PC-3 (cell line): ENCODE measurements at regions of chr10 and their contacts with region 1.

Region 1: DNA sequence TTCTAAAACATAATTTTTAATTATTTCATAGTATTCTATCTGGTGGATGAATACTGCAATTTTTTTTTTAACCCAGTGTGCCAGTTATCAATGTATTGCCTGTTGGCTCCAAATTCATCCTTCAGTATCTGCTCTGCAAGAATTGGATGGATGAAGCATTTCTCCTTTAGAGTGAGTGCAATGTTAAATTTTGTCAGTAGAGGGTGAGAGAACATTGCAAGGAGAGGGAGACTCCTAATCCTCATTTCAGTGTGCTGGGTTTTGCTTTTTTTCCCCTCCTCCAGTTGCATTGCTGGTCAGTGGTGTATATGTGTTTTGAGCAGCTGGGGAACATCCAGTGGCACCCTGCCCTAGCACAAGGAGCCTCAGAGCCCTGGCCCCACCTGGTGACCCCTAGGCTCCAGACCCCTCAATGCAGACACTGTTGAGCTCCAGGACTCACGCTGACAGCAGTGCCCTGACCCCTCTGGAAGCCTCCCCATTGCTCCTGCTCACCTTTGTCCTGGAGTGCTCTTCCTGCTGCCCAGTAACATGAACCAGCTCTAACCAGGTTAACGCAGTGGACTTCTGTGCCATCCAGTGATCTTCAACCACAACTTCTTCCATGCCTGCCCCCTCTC is 199.4 kb downstream of the USP6NL start:
- DNase-seq: no peak
- ATAC-seq: no peak
- H3K4me3 ChIP-seq: no peak overlapping the region
- H3K27ac ChIP-seq: no peak overlapping the region
- H3K4me1 ChIP-seq: no peaks in the 10 kb centered on the region
- H3K27me3 ChIP-seq: no peaks in the 10 kb centered on the region
- CTCF ChIP-seq: 0 out of 2 replicates have a peak, but pooled peaks have one; percentile 22

Region 2: DNA sequence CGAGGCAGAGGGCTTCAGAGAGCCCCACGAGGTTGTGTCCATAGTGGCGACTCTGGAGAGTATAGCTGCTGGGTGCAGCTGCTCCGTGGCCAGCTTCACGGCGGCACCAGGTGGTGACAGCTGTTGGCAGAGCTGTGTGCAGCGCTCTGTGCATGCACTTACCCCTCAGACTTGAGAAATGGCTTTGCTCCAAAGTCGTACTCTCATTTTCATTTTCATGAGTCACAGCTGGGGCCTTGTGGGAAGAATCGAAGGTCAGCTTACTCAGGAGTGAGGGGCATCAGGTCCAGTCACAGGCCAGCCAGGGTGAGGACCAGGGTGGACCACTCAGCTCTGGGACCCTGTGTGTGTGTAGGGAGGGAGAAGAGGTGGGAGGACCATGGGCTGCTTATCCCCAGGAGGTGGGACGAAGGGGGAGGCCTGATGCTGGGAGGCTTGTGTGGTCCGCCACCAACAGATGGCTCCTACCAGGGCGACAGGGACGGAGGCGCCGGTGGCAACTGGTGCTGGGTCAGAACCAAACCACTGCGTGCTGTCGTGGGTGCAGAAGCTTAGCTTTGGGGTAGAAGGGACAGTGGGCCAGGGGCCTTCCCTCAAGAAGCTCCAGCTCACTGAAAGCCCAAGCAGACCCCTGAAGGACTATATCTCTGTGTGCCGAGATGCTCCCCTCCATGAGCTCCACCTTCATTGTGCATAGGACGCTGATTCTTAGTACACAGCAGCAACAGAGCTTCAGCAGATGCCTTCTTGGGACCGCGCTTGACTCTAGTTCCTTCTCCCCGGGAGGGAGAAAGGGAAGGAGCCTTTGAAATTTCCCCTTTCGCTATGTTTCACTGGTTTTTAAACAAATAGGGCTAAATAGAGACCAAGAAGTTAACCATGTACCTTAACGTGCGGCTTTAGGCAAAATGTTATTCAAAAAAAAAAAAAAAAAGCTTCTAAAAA is 169.3 kb before region 1 on chr10:
- CTCF ChIA-PET with region 1: no interaction called
- POLR2A ChIA-PET with region 1: no interaction called
- intact Hi-C with region 1: no loop called
- DNase-seq: no peak
- ATAC-seq: no peak
- H3K4me3 ChIP-seq: no peak overlapping the region
- H3K27ac ChIP-seq: no peak overlapping the region
- H3K4me1 ChIP-seq: no peaks in the 10 kb centered on the region
- H3K27me3 ChIP-seq: peaks cover 21% of the 10 kb centered on the region; the same call in 1 of the 2 replicates
- CTCF ChIP-seq: no peak

Region 3: GRCh38 chr10:11364241-11364640 is 47.8 kb before region 1 on chr10:
- CTCF ChIA-PET with region 1: no interaction called
- POLR2A ChIA-PET with region 1: interaction called, 10 read pairs
- intact Hi-C with region 1: no loop called
- DNase-seq: no peak
- ATAC-seq: no peak
- H3K4me3 ChIP-seq: no peak overlapping the region
- H3K27ac ChIP-seq: no peak overlapping the region
- H3K4me1 ChIP-seq: no peaks in the 10 kb centered on the region
- H3K27me3 ChIP-seq: no peaks in the 10 kb centered on the region
- CTCF ChIP-seq: no peak

Region 4: GRCh38 chr10:11472158-11472753 is 60.2 kb after region 1 on chr10:
- CTCF ChIA-PET with region 1: no interaction called
- POLR2A ChIA-PET with region 1: no interaction called
- intact Hi-C with region 1: no loop called
- DNase-seq: peak; percentile 59
- ATAC-seq: peak; percentile 66
- H3K4me3 ChIP-seq: no peak overlapping the region
- H3K27ac ChIP-seq: no peak overlapping the region
- H3K4me1 ChIP-seq: peaks cover 5% of the 10 kb centered on the region; the same call in 1 of the 2 replicates
- H3K27me3 ChIP-seq: no peaks in the 10 kb centered on the region
- CTCF ChIP-seq: peak; percentile 69

Region 5: GRCh38 chr10:11611248-11612020 is 199.4 kb after region 1 on chr10 and contains the start of gene USP6NL:
- CTCF ChIA-PET with region 1: no interaction called
- POLR2A ChIA-PET with region 1: no interaction called
- intact Hi-C with region 1: no loop called
- DNase-seq: peak; percentile 74
- ATAC-seq: peak; percentile 89
- H3K4me3 ChIP-seq: peak within 1 kb of the TSS; percentile 75
- H3K27ac ChIP-seq: peak within 1 kb of the TSS; percentile 34; the same call in 1 of the 2 replicates
- H3K4me1 ChIP-seq: peaks cover 14% of the 10 kb centered on the region; the same call in 1 of the 2 replicates
- H3K27me3 ChIP-seq: no peaks in the 10 kb centered on the region
- CTCF ChIP-seq: no peak
- total RNA-seq, gene USP6NL: 13.0 and 14.3 TPM in 2 replicates

Region 6: DNA sequence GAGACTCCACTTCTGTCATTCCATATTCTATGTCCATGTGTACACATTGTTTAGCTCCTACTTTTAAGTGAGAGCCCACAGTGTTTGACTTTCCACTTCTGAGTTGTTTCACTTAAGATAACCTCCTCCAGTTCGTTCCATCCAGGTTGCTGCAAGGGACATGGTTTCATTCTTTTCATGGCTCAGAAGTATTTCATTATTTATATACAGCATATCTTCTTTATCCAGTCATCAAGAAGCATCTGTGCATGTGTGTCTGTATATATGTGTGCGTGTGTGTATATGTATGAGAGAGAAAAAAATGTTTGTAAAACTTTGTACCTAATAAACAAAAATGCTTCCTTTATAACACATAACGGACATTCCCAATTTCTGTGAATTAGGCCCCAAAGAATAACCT is 723.6 kb after region 1 on chr10:
- CTCF ChIA-PET with region 1: no interaction called
- POLR2A ChIA-PET with region 1: no interaction called
- intact Hi-C with region 1: no loop called
- DNase-seq: no peak
- ATAC-seq: no peak
- H3K4me3 ChIP-seq: no peak overlapping the region
- H3K27ac ChIP-seq: no peak overlapping the region
- H3K4me1 ChIP-seq: no peaks in the 10 kb centered on the region
- H3K27me3 ChIP-seq: no peaks in the 10 kb centered on the region
- CTCF ChIP-seq: no peak